Activated CD4-positive, alpha-beta memory T cell treated with anti-CD3 and anti-CD28 coated beads, Interleukin-2, amount 10 ng/mL, durations not matched to agents 7 days and 5 days (primary cell): ENCODE measurements at regions of chr4 and their contacts with region 1.

Region 1: GRCh38 chr4:47686294-47686872 is 151.5 kb downstream of the CORIN start:
- DNase-seq: peak; percentile 68
- H3K4me3 Mint-ChIP-seq: no peak overlapping the region
- H3K27ac Mint-ChIP-seq: no peak overlapping the region
- H3K4me1 Mint-ChIP-seq: no peaks in the 10 kb centered on the region
- H3K27me3 Mint-ChIP-seq: peaks cover 19% of the 10 kb centered on the region

Region 2: GRCh38 chr4:47933840-47934239 is 247.5 kb after region 1 on chr4:
- CTCF ChIA-PET with region 1: interaction called, 11 read pairs
- POLR2A ChIA-PET with region 1: no interaction called
- DNase-seq: no peak
- H3K4me3 Mint-ChIP-seq: no peak overlapping the region
- H3K27ac Mint-ChIP-seq: no peak overlapping the region
- H3K4me1 Mint-ChIP-seq: no peaks in the 10 kb centered on the region
- H3K27me3 Mint-ChIP-seq: peaks cover 23% of the 10 kb centered on the region